ENCODE measurements at regions of chr2 and their contacts with region 1.

Region 1: GRCh38 chr2:96514521-96514920 is 9.4 kb upstream of the NEURL3 start:
- DNase-seq: no peak
- ATAC-seq: no peak
- H3K4me3 ChIP-seq: no peak overlapping the region
- H3K4me1 ChIP-seq: no peaks in the 10 kb centered on the region
- CTCF ChIP-seq: no peak

Region 2: DNA sequence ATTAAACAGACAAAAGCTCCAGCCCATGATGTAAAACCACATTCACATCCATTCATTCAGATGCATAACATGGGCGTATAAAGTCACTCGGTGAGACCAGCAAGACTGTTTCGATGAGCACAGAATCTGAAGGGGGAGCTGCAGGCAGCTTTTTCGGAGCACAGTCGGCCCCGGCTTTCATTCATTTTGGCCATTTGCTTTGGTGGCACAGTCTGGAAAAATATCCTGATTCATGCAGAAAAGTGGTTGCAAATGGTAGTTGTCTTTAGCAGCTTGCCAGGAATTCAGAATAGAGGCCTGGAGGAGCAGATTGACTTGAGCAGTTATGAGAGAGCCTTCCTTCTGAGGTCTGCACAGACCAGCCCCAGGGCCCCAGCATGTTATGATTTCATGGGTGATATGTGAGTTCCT is 33.2 kb after region 1 on chr2:
- intact Hi-C with region 1: loop called in 1 of 2 experiments (anchors 5 kb)
- DNase-seq: peak in 1 of 3 donors; percentile 5
- ATAC-seq: no peak
- H3K4me3 ChIP-seq: no peak overlapping the region
- H3K4me1 ChIP-seq: no peaks in the 10 kb centered on the region
- CTCF ChIP-seq: no peak

Region 3: GRCh38 chr2:96580771-96581170 is 66.2 kb after region 1 on chr2:
- intact Hi-C with region 1: no loop called
- DNase-seq: no peak
- ATAC-seq: peak; percentile 9
- H3K4me3 ChIP-seq: no peak overlapping the region
- H3K4me1 ChIP-seq: no peaks in the 10 kb centered on the region
- CTCF ChIP-seq: no peak

Measured in mucosa of descending colon (tissue), 3 donors.